ENCODE measurements at regions of chr18 and their contacts with region 1.

Region 1: GRCh38 chr18:23503038-23503962 is at the start of gene RMC1:
- DNase-seq: peak; percentile 76 to 97
- H3K4me3 ChIP-seq: peak within 1 kb of the TSS; percentile 90 to 98
- H3K27ac ChIP-seq: peak within 1 kb of the TSS; percentile 96 to 97
- H3K4me1 ChIP-seq: peaks cover 0 to 24% of the 10 kb centered on the region in 2 donors
- H3K27me3 ChIP-seq: no peaks in the 10 kb centered on the region
- CTCF ChIP-seq: peak in 2 of 3 experiments; percentile 0 to 43
- total RNA-seq, gene RMC1: 20.1 TPM

Region 2: GRCh38 chr18:23131693-23132319 is 371.5 kb before region 1 on chr18:
- intact Hi-C with region 1: loop called (anchors 5 kb)
- DNase-seq: peak in 1 of 2 donors; percentile 85
- H3K4me3 ChIP-seq: no peak overlapping the region
- H3K27ac ChIP-seq: no peak overlapping the region
- H3K4me1 ChIP-seq: peaks cover 0 to 3% of the 10 kb centered on the region in 2 donors
- H3K27me3 ChIP-seq: no peaks in the 10 kb centered on the region
- CTCF ChIP-seq: peak; percentile 74 to 82 (median 75)

Region 3: GRCh38 chr18:23437357-23438045 is 65.8 kb before region 1 on chr18:
- intact Hi-C with region 1: loop called (anchors 5 kb)
- DNase-seq: peak; percentile 33 to 88
- H3K4me3 ChIP-seq: peak overlapping the region; percentile 56 to 95
- H3K27ac ChIP-seq: peak overlapping the region in 1 of 2 donors; percentile 54
- H3K4me1 ChIP-seq: no peaks in the 10 kb centered on the region
- H3K27me3 ChIP-seq: no peaks in the 10 kb centered on the region
- CTCF ChIP-seq: no peak

Region 4: DNA sequence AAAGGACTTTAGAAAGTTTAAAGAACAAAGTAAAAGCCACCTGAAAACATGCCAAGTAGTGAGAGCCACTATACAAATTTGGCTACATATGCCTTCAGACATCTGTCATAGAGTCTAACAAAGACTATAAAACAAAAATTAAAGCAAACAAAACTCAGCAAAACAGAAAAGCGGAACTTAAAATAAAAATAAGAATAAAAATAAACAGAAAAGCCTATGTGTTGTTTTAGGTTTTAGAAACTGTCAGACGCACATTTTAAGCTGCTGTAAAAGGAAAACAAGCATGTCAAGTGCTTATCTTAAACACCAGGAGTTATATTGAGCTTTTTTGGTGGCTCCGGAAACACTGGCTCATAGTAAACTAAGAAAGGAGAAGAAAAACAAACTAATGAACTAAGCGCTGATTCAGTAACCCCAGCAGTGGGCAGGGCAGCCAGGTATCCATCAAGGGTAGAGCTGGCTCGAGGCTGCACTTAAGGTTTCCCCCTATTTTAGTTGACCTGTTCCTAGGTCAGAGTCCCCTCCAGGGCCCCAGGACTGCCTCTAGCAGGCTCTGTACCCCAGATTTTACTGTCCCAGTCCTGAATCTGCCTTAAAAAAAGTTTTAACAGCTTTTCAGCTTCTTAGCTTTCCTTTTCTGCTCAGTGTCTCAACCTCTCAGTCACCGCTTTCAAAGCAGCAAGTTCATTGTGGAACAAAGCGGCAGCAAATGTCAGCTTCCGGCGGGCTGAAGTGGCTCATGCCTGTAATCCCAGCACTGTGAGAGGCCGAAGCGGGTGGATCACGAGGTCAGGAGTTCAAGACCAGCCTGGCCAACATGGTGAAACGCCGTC is 15.3 kb before region 1 on chr18:
- intact Hi-C with region 1: loop called (anchors 1 kb)
- DNase-seq: peak; percentile 42 to 82
- H3K4me3 ChIP-seq: peak overlapping the region; percentile 47 to 61
- H3K27ac ChIP-seq: peak overlapping the region; percentile 90 to 95
- H3K4me1 ChIP-seq: peaks cover 3 to 19% of the 10 kb centered on the region in 2 donors
- H3K27me3 ChIP-seq: no peaks in the 10 kb centered on the region
- CTCF ChIP-seq: no peak

Region 5: GRCh38 chr18:23828426-23828825 is 325.1 kb after region 1 on chr18:
- intact Hi-C with region 1: loop called (anchors 10 kb)
- DNase-seq: no peak
- H3K4me3 ChIP-seq: no peak overlapping the region
- H3K27ac ChIP-seq: no peak overlapping the region
- H3K4me1 ChIP-seq: peaks cover 8 to 20% of the 10 kb centered on the region in 2 donors
- H3K27me3 ChIP-seq: no peaks in the 10 kb centered on the region
- CTCF ChIP-seq: no peak